BJ (cell line): ENCODE measurements at regions of chr5 and their contacts with region 1.

Region 1: GRCh38 chr5:71782771-71783770 is 64.0 kb downstream of the CARTPT start:
- DNase-seq: no peak
- H3K4me3 ChIP-seq: peak overlapping the region; percentile 11; the same call in 1 of the 2 replicates
- H3K27me3 ChIP-seq: no peaks in the 10 kb centered on the region
- CTCF ChIP-seq: peak; percentile 84

Region 2: DNA sequence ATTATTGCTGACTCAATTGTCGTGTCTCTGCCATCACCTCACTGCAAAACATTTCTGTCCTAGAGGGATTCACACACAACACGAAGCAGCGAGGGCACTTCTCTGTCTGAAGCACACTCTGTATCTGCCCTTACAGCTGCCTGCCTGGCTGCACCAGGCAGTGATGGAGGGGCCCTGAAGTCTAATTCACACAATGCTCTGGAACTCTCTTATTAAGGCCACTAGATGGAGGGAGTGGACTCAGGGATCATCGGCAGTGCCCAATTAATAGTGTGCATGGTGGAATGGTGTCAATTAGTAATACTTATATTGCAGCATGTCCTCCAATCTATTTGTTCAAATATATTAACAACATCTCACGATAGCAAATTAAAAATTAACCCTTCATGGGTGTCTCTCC is 166.7 kb after region 1 on chr5:
- CTCF ChIA-PET with region 1: no interaction called
- POLR2A ChIA-PET with region 1: no interaction called
- DNase-seq: no peak
- H3K4me3 ChIP-seq: no peak overlapping the region
- H3K27me3 ChIP-seq: peaks cover 5% of the 10 kb centered on the region
- CTCF ChIP-seq: no peak

Region 3: DNA sequence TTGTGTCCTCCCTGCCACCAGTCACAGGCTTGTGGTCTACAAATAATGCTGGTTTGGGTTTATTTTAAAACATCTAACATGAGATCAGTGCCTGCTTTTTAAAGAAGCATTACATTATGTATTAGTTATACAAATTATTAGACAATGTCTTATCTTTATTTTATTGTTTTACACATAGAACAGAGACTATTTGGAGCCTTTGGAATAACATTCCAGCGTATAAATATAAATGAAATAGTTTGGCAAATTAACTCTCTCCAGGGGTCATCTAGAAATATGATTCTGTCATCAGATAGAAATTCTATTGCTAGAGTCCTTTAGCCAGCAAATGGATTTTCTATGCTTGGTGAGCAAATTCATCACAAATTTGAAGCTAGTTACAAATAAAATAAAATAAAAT is 346.7 kb after region 1 on chr5:
- CTCF ChIA-PET with region 1: no interaction called
- POLR2A ChIA-PET with region 1: no interaction called
- DNase-seq: no peak
- H3K4me3 ChIP-seq: no peak overlapping the region
- H3K27me3 ChIP-seq: no peaks in the 10 kb centered on the region
- CTCF ChIP-seq: no peak

Region 4: GRCh38 chr5:72307968-72308852 is 525.1 kb after region 1 on chr5:
- CTCF ChIA-PET with region 1: interaction called, 34 read pairs
- POLR2A ChIA-PET with region 1: no interaction called
- DNase-seq: peak; percentile 84
- H3K4me3 ChIP-seq: peak overlapping the region; percentile 62
- H3K27me3 ChIP-seq: no peaks in the 10 kb centered on the region
- CTCF ChIP-seq: peak; percentile 81